ENCODE measurements at regions of chr19 and their contacts with region 1.

Region 1: DNA sequence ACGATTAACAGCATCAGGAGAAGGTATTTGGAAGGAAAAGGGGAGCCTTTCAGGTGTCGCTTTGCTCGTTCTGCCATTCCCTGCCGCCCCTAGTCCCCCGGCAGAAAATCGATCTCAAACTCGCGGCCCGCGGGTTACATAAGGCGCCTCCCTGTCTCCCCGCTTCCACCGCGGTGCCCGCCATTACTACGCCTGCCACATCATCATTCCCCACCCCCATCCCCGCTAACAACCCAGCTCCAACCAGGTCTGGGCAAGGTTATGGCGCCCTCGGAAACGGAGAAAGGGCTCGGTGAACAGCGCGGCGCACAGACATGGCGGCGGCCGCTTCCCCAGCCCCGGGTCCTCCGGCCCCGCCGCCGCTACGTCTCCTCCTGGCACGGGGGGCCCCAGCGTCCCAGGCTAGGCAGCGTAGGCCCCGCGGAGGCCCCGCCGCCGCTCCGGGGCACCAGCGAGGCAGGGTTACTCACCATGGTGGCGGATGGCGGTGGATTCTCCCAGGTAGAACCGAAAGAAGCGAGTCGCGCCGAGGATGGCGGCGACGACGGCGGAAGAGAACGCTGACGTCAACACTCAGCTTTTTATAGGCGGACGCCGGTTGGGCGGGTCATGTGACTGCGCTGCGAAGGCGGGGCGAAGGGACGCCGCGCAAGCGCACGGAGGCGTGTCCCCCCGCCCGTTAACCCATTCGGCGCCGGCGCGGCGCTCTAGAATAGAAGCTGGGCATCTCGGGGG is at the start of gene EEF2:
- DNase-seq: peak in 1 of 2 donors; percentile 91
- H3K4me3 ChIP-seq: peak within 1 kb of the TSS; percentile 79 to 100
- H3K27ac ChIP-seq: peak within 1 kb of the TSS; percentile 92
- H3K4me1 ChIP-seq: peaks cover 49% of the 10 kb centered on the region
- H3K27me3 ChIP-seq: no peaks in the 10 kb centered on the region
- CTCF ChIP-seq: peak in 1 of 3 experiments; percentile 15
- POLR2A ChIP-seq: peak; percentile 47 to 99
- total RNA-seq, gene EEF2: 1,702 TPM

Region 2: DNA sequence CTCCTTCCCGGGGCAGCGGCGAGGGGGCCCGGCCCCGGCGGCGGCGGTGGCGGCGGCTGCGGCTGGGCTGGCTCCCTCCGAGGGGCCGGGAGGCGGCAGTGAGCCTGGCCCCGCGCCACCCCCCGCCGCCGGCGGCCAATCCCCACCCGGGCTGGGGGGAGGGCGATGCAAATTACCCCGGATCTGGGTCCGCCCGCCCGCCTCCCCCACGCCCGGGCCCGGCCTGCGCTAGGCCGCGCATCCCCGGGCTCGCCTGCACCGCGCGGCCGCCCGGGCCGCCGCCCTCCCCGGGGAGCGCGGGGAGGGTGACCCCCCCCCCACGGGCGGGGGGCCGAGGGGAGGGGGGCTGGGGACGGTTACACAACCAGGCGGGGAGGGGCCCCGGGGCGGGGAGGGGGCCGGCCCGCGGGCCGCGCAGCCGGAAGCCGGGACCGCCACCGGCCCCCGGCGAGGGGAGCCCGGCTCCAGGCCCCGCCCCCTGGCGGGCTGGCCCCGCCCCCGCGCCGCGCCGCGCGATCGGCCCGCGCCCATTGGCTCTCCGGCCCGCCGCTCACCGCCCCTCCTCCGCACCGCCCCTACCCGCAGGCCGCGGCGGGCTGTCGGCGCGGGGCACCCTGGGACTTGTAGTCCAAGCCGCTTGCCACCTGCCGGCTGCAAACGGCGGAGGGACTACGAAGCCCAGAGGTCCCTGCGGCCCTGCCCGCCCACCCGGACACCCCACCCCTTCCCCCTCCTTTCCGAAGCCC is 80.5 kb after region 1 on chr19:
- intact Hi-C with region 1: loop called (anchors 5 kb)
- DNase-seq: peak in 1 of 2 donors; percentile 98
- H3K4me3 ChIP-seq: peak overlapping the region; percentile 99 to 100
- H3K27ac ChIP-seq: peak overlapping the region; percentile 100
- H3K4me1 ChIP-seq: peaks cover 56% of the 10 kb centered on the region
- H3K27me3 ChIP-seq: no peaks in the 10 kb centered on the region
- CTCF ChIP-seq: no peak
- POLR2A ChIP-seq: no peak

Region 3: DNA sequence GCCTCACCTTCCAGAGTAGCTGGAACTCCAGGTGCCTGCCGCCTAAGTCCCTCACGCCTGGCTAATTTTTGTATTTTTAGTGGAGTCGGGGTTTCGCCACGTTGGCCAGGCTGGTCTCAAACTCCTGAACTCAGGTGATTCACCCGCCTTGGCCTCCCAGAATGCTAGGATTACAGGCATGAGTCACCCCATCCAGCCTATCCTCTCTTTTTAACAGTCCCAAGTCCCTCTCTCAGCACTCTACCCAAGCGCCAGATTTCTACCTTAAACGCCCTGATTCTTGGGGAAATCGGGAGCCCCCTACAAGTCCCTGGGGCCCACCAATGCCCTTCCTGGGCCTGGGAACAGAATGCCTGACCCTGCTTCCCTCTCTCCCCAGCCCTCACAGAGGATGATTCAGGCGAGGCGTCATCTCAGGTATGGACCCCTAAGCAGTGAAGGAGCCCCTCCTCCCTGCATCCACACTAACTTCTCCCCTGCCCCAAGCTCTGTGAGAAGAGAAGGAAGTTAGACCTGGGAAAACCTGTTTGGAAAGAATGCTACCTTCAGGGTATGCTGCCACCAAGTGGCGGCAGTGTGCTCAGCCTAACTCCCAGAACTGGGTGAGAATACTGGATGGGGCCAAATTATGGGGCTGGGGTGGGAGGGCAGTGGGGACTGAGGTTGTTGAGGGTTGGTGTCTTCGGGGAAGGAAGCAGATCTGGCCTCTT is 223.5 kb after region 1 on chr19:
- intact Hi-C with region 1: loop called (anchors 10 kb)
- DNase-seq: no peak
- H3K4me3 ChIP-seq: no peak overlapping the region
- H3K27ac ChIP-seq: no peak overlapping the region
- H3K4me1 ChIP-seq: peaks cover 5% of the 10 kb centered on the region
- H3K27me3 ChIP-seq: no peaks in the 10 kb centered on the region
- CTCF ChIP-seq: no peak
- POLR2A ChIP-seq: no peak

Measured in vagina (tissue), 2 donors.